B cell (primary cell): ENCODE measurements at regions of chr6 and their contacts with region 1.

Region 1: DNA sequence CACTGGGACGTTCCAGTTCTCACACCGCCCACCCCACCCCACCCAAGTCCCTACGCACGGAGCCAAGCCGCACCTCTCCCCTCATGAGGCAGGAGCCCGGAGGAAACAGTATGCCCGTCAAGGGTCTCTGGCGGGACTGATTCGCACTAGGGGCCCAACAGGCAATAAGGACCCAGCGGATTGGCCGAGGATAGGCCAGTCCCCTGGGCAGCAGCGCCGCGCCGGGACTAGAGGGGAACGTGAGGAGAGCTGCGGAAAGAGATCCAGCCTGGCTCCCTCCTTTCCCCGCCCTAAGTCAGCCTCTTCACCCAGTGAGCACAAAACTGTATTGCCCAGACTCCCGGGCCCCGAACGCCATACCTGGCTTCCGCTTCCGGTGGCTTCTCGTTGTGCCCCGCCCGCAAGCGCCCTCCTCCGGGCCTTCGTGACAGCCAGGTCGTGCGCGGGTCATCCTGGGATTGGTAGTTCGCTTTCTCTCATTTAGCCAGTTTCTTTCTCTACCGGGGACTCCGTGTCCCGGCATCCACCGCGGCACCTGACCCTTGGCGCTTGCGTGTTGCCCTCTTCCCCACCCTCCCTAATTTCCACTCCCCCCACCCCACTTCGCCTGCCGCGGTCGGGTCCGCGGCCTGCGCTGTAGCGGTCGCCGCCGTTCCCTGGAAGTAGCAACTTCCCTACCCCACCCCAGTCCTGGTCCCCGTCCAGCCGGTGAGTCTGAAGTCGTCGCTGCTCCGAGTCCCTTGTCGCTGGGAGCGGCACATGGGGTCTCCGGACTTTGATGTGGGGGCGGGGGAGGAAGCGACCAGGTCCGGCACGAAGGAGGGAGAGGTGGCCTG is at the start of gene CSNK2B:
- DNase-seq: peak; percentile 98
- ATAC-seq: peak; percentile 87
- H3K4me3 ChIP-seq: peak within 1 kb of the TSS; percentile 58 to 98 (median 85)
- H3K4me3 Mint-ChIP-seq: peak within 1 kb of the TSS; percentile 96
- H3K27ac ChIP-seq: peak within 1 kb of the TSS; percentile 96 to 98
- H3K27ac Mint-ChIP-seq: peak within 1 kb of the TSS; percentile 100
- H3K4me1 ChIP-seq: peaks cover 27 to 47% of the 10 kb centered on the region in 2 donors
- H3K4me1 Mint-ChIP-seq: peaks cover 53% of the 10 kb centered on the region
- H3K27me3 ChIP-seq: no peaks in the 10 kb centered on the region
- H3K27me3 Mint-ChIP-seq: no peaks in the 10 kb centered on the region
- CTCF ChIP-seq: no peak
- total RNA-seq, gene CSNK2B: 141 and 146 TPM in 2 replicates

Region 2: DNA sequence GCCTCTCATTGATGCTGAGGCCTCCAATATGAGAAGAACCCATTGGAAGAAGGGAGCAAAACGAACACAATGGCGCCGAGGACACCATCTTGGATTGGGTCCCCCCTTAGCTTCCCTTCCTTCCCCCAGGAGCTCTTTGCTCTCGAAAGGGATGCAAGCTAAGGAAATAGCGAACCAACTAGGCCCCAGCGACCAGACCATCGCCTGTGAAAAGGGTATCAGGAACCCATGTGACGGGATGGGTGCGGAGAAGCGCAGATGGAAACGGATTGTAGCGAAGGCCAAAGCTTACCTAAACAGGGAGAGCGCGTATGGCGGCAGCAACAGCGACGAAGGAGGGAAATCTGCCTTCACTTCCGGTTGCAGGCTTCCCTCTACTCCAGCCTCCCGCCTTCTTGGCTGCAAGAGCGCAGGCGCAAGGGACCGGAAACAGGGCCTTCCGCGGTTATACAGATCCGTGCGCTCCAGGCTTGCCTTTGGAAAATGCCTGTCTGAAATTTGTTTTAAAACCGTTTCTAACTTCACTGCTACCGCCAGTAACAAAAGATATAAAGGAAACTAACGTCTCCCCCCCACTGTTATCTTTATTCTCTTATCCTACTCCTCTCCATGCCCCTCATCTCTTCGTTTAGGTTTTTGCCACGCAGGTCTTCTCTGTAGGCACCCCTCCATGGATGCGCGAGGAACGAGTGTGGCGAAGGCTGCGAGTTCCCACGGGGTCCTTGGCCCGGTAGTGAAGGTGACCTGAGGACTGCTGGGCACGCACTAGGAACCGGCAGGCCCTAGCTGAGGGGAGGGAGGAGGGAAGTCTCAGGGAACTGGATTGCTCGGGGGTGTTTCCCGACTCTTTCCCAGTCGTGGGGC is 123.8 kb before region 1 on chr6 and contains the start of gene DDX39B:
- CTCF ChIA-PET with region 1: interaction called, 3 read pairs
- POLR2A ChIA-PET with region 1: interaction called, 4 read pairs
- intact Hi-C with region 1: loop called (anchors 1 kb)
- DNase-seq: peak; percentile 97
- ATAC-seq: peak; percentile 72
- H3K4me3 ChIP-seq: peak within 1 kb of the TSS; percentile 79 to 100 (median 97)
- H3K4me3 Mint-ChIP-seq: peak within 1 kb of the TSS; percentile 99
- H3K27ac ChIP-seq: peak within 1 kb of the TSS; percentile 97 to 99
- H3K27ac Mint-ChIP-seq: peak within 1 kb of the TSS; percentile 93
- H3K4me1 ChIP-seq: peaks cover 37 to 43% of the 10 kb centered on the region in 2 donors
- H3K4me1 Mint-ChIP-seq: peaks cover 50% of the 10 kb centered on the region
- H3K27me3 ChIP-seq: no peaks in the 10 kb centered on the region
- H3K27me3 Mint-ChIP-seq: no peaks in the 10 kb centered on the region
- CTCF ChIP-seq: no peak
- total RNA-seq, gene DDX39B: 576 and 577 TPM in 2 replicates

Region 3: GRCh38 chr6:31652925-31653718 is 12.6 kb before region 1 on chr6:
- CTCF ChIA-PET with region 1: interaction called, 10 read pairs
- POLR2A ChIA-PET with region 1: interaction called, 57 read pairs
- intact Hi-C with region 1: loop called (anchors 1 kb)
- DNase-seq: no peak
- ATAC-seq: peak; percentile 69
- H3K4me3 ChIP-seq: peak overlapping the region; percentile 66 to 96 (median 86)
- H3K4me3 Mint-ChIP-seq: peak overlapping the region; percentile 98
- H3K27ac ChIP-seq: peak overlapping the region; percentile 97 to 98
- H3K27ac Mint-ChIP-seq: peak overlapping the region; percentile 100
- H3K4me1 ChIP-seq: peaks cover 22 to 29% of the 10 kb centered on the region in 2 donors
- H3K4me1 Mint-ChIP-seq: peaks cover 48% of the 10 kb centered on the region
- H3K27me3 ChIP-seq: no peaks in the 10 kb centered on the region
- H3K27me3 Mint-ChIP-seq: no peaks in the 10 kb centered on the region
- CTCF ChIP-seq: no peak

Region 4: GRCh38 chr6:31795616-31796298 is 130.0 kb after region 1 on chr6 and contains the start of gene VARS1:
- CTCF ChIA-PET with region 1: no interaction called
- POLR2A ChIA-PET with region 1: interaction called, 3 read pairs
- intact Hi-C with region 1: loop called (anchors 5 kb)
- DNase-seq: peak; percentile 96
- ATAC-seq: peak; percentile 91
- H3K4me3 ChIP-seq: peak within 1 kb of the TSS; percentile 72 to 96 (median 95)
- H3K4me3 Mint-ChIP-seq: peak within 1 kb of the TSS; percentile 97
- H3K27ac ChIP-seq: peak within 1 kb of the TSS; percentile 75 to 87
- H3K27ac Mint-ChIP-seq: peak within 1 kb of the TSS; percentile 99
- H3K4me1 ChIP-seq: peaks cover 45 to 59% of the 10 kb centered on the region in 2 donors
- H3K4me1 Mint-ChIP-seq: peaks cover 54% of the 10 kb centered on the region
- H3K27me3 ChIP-seq: no peaks in the 10 kb centered on the region
- H3K27me3 Mint-ChIP-seq: no peaks in the 10 kb centered on the region
- CTCF ChIP-seq: peak; percentile 79
- total RNA-seq, gene VARS1: 47.4 and 52.3 TPM in 2 replicates

Region 5: DNA sequence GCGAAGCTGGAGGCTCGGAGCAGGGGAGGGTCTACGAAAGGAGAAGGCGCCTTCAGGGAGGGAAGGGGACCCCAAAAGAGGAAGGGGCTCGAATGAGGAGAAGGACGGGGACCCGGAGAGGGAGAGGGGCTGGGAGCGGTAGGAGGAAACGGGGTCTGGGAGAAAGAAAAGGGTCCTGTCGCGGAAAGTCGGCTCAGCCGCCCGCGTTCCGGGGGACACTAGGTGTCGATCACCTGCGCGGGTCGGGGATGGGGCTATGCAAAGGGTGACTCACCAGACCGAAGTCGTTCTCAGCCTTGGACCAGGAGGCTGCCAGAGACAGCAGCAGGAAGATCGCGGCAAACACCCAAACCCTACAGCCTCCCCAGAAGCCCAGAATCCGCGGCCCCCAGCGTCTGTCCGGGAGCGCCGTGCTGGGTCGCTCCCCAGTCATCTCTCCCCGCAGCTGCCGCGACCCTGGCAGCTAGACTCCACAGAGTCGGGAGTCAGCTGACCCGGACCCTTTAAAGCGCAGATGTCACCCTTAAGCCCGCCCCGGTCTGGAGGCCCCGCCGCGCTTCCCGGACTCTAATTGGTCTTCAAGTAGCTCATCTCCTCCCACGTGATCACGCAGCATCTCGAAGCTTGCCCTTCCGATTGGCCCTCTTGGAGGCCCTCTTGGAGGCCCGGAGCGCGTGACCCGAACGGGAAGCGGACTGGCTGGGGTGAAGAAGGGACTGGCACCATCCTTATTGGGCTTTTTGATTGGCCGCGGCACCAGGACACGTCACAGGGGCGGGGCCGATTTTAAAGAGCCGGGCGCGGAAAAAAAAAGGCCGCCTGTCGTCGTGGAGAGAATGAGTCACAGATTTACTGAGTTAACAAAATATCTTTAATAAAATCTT is 196.9 kb after region 1 on chr6 and contains the start of gene NEU1:
- CTCF ChIA-PET with region 1: no interaction called
- POLR2A ChIA-PET with region 1: interaction called, 4 read pairs
- intact Hi-C with region 1: loop called (anchors 1 kb)
- DNase-seq: peak; percentile 100
- ATAC-seq: peak; percentile 90
- H3K4me3 ChIP-seq: peak within 1 kb of the TSS; percentile 69 to 92 (median 85)
- H3K4me3 Mint-ChIP-seq: peak within 1 kb of the TSS; percentile 94
- H3K27ac ChIP-seq: peak within 1 kb of the TSS; percentile 77 to 91
- H3K27ac Mint-ChIP-seq: peak within 1 kb of the TSS; percentile 92
- H3K4me1 ChIP-seq: peaks cover 18 to 23% of the 10 kb centered on the region in 2 donors
- H3K4me1 Mint-ChIP-seq: peaks cover 24% of the 10 kb centered on the region
- H3K27me3 ChIP-seq: no peaks in the 10 kb centered on the region
- H3K27me3 Mint-ChIP-seq: no peaks in the 10 kb centered on the region
- CTCF ChIP-seq: no peak
- total RNA-seq, gene NEU1: 25.3 and 26.0 TPM in 2 replicates

Region 6: DNA sequence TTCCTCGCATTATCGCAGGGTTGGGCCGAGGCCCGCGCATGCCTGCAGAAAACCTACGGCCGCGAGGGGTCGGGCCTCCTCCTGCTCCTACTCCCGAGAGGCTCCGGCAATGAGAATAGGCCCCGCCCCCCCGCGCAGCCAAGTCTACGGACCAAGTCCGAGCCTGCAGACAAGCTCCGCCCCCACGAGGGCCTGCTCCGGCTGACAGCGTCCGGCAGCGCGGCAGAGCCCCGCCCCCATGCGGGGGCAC is 529.9 kb after region 1 on chr6:
- CTCF ChIA-PET with region 1: no interaction called
- POLR2A ChIA-PET with region 1: no interaction called
- intact Hi-C with region 1: loop called (anchors 5 kb)
- DNase-seq: no peak
- ATAC-seq: peak; percentile 83
- H3K4me3 ChIP-seq: peak overlapping the region in 4 of 5 experiments; percentile 89 to 99 (median 94)
- H3K4me3 Mint-ChIP-seq: peak overlapping the region; percentile 95
- H3K27ac ChIP-seq: peak overlapping the region; percentile 99 to 100
- H3K27ac Mint-ChIP-seq: peak overlapping the region; percentile 99
- H3K4me1 ChIP-seq: peaks cover 40 to 56% of the 10 kb centered on the region in 2 donors
- H3K4me1 Mint-ChIP-seq: peaks cover 58% of the 10 kb centered on the region
- H3K27me3 ChIP-seq: no peaks in the 10 kb centered on the region
- H3K27me3 Mint-ChIP-seq: no peaks in the 10 kb centered on the region
- CTCF ChIP-seq: peak; percentile 55